Heart right ventricle (tissue), 16 donors: ENCODE measurements at regions of chr4 and their contacts with region 1.

Region 1: GRCh38 chr4:76067652-76068286 is 6.7 kb upstream of the ART3 start:
- DNase-seq: peak; percentile 25 to 81
- ATAC-seq: peak; percentile 67 to 91 (median 86)
- H3K4me3 ChIP-seq: no peak overlapping the region
- H3K27ac ChIP-seq: no peak overlapping the region
- H3K4me1 ChIP-seq: peaks cover 0 to 3% (median 0%) of the 10 kb centered on the region in 9 donors
- H3K27me3 ChIP-seq: no peaks in the 10 kb centered on the region
- CTCF ChIP-seq: peak; percentile 57 to 95 (median 91)

Region 2: DNA sequence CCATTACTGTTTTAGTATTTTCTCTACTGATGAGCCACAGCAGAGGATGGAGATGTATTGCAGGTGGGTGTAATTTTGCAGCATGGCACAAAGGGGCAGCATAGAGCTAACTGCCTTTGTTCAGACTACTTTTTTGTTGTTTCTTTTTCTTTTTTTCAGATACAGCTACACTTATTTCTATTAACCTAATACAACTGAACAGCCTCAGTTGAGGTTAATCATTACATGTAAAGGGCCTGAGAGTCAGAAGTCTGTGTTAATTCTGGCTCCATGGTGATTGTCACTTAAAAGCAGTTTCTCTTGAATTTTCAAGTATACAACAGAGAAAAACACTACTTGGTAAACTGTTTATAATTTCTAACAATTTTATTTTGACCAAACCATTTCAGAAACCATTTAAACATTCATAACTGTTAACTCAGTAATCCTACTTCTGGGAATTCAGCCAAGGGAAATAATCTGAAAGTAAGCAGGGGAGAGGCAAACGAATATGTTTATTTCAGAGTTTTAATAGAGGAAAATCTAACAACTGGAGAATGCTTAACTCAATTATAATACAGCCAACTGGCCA is 151.6 kb before region 1 on chr4:
- intact Hi-C with region 1: loop called in 4 of 10 experiments (anchors 5 to 10 kb)
- DNase-seq: no peak
- ATAC-seq: peak in 6 of 8 donors; percentile 38 to 67 (median 52)
- H3K4me3 ChIP-seq: no peak overlapping the region
- H3K27ac ChIP-seq: peak overlapping the region in 3 of 10 donors; percentile 5 to 36 (median 17)
- H3K4me1 ChIP-seq: peaks cover 0 to 13% (median 0%) of the 10 kb centered on the region in 9 donors
- H3K27me3 ChIP-seq: no peaks in the 10 kb centered on the region
- CTCF ChIP-seq: peak; percentile 26 to 84 (median 69)

Region 3: DNA sequence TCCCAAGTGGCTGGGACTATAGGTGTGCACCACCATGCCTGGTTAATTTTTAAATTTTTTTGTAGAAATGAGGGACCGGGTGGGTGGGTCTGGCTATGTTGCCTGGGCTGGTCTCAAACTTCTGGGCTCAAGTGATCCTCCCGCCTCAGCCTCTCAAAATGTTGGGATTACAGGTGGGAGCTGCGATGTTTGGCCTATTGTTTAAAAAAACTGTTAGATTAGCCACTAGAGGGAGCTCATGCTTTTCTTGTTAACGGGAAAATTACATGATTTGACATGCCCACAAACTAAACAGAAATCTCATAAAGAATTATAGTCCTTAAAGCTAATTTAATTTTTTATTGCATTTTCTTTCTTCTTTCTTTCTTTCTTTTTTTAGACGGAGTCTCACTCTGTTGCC is 72.0 kb before region 1 on chr4:
- intact Hi-C with region 1: loop called (anchors 1 to 5 kb)
- DNase-seq: no peak
- ATAC-seq: peak in 4 of 8 donors; percentile 31 to 56 (median 42)
- H3K4me3 ChIP-seq: no peak overlapping the region
- H3K27ac ChIP-seq: no peak overlapping the region
- H3K4me1 ChIP-seq: peaks cover 0 to 6% (median 4%) of the 10 kb centered on the region in 9 donors
- H3K27me3 ChIP-seq: no peaks in the 10 kb centered on the region
- CTCF ChIP-seq: peak; percentile 67 to 83 (median 76)

Region 4: GRCh38 chr4:76002176-76002575 is 65.6 kb before region 1 on chr4:
- intact Hi-C with region 1: loop called in 3 of 10 experiments (anchors 2 to 5 kb)
- DNase-seq: no peak
- ATAC-seq: peak; percentile 61 to 89 (median 80)
- H3K4me3 ChIP-seq: no peak overlapping the region
- H3K27ac ChIP-seq: peak overlapping the region in 7 of 10 donors; percentile 21 to 75 (median 59)
- H3K4me1 ChIP-seq: peaks cover 0 to 22% (median 8%) of the 10 kb centered on the region in 9 donors
- H3K27me3 ChIP-seq: no peaks in the 10 kb centered on the region
- CTCF ChIP-seq: no peak

Region 5: DNA sequence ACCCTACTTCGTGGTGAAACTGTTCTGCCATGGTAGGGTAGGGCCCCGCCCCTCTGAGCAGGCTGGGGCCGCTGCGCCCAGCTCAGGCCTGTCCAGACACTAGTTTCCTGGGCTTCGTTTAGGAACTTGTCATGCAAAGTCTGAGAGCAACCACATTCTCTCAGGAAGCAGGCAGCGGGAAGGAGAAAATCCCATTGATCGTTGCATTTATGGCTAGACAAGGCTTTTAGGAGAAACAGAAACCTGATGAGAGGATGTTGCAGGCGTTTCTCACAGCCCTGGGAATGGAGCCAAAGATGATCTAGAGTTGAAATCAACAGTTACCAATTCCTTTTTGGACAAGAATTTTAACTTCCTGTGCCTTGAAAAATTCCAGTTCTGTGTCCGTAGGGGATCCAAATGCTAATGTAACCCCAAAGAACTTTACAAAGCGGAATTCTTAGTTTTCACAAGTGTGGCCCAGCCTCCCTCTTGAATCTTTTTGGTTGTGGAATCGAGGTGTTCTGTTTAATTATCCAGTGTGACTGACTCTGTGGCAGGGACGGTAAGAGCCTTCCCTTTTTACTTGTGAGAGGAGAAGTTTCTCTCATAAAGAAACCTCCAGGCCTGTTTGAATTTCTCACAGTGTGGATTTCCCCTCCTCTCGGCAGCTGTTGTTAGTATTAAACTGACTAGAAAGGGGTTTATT is 55.9 kb before region 1 on chr4:
- intact Hi-C with region 1: loop called in 1 of 10 experiments (anchors 5 kb)
- DNase-seq: peak; percentile 14 to 79
- ATAC-seq: peak; percentile 64 to 82 (median 76)
- H3K4me3 ChIP-seq: peak overlapping the region in 5 of 10 donors; percentile 16 to 34 (median 24)
- H3K27ac ChIP-seq: peak overlapping the region; percentile 57 to 92 (median 83)
- H3K4me1 ChIP-seq: peaks cover 2 to 31% (median 20%) of the 10 kb centered on the region in 9 donors
- H3K27me3 ChIP-seq: no peaks in the 10 kb centered on the region
- CTCF ChIP-seq: no peak